ENCODE measurements at regions of chr3 and their contacts with region 1.

Region 1: DNA sequence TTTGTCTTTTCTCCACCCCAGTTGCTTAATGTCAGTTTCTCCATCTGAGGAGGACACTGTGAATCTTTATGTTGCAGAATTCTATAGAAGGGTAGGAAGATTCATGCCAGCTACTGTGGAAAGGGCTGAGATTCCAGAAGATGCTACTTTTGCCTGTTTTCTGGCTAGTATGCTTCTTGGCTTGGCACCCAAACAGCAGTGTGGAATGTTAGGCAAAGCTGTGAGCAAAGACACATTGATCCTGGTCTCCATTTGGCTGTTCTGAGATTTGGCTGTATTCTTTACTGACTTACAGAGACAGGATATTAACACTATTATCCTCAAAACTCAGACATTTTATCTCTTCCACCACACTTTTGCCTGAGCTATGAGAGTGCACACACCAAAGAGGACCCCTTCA is 39.3 kb downstream of the PDHB start:
- DNase-seq: no peak
- H3K4me3 ChIP-seq: no peak overlapping the region
- CTCF ChIP-seq: no peak

Region 2: GRCh38 chr3:58324391-58325390 is 69.6 kb before region 1 on chr3:
- CTCF ChIA-PET with region 1: interaction called, 12 read pairs
- POLR2A ChIA-PET with region 1: no interaction called
- DNase-seq: no peak
- H3K4me3 ChIP-seq: no peak overlapping the region
- CTCF ChIP-seq: no peak

Region 3: DNA sequence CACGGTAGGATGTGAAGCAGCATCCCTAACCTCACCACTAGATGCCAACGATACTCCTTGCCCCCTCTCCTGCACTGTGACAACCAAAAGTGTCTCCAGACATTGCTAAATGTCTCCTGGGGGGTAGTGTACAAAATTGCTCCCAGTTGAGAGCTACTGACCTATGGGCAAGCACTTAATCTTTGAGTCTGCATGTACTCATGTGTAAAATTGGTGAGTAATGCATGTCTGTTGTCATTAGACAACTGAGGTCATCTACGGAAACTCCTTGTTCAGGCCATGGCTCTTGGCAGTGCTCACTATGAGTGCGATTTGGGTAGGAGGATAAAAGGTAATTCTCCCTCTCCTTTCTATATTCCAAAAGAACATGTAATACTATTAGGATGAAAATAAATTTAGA is 10.1 kb after region 1 on chr3:
- CTCF ChIA-PET with region 1: interaction called, 25 read pairs
- POLR2A ChIA-PET with region 1: no interaction called
- DNase-seq: no peak
- H3K4me3 ChIP-seq: no peak overlapping the region
- CTCF ChIP-seq: no peak

Region 4: GRCh38 chr3:58766587-58767282 is 372.4 kb after region 1 on chr3:
- CTCF ChIA-PET with region 1: no interaction called
- POLR2A ChIA-PET with region 1: no interaction called
- DNase-seq: no peak
- H3K4me3 ChIP-seq: no peak overlapping the region
- CTCF ChIP-seq: no peak

Measured in AG04449 (cell line).